ENCODE measurements at regions of chr1 and their contacts with region 1.

Region 1: DNA sequence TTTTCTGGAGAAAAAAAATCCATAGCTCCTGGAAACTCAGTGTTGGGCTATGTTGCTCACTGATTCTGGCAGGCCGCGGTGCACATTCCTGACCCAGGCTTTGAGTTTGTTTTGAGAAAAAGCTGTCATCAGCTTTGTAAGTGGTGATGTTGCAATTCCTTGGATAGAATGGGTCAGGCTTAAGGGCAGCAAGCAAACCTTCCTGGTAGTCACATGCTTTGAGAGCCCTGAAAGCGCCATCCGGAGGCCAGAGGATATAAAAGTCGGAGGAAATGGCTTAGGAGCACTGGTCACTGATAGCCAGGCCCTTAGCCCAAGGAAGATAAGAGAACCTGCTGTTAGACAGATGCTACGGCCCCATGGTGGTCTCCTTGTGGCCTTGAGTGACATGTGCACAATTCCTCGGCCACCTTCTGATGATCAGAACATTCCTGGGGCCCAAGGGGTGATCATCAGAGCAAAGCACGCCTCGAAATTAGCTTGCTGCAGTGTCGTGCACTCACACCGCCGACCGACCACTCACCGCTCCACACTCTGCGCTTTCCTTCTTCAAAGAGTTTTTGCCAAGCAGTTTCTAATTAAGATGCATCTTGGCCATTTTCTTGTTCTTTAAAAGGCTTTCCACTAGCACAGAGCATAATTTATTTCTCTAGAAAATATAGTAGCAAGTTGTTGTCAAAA is 78.6 kb downstream of the MAN1C1 start:
- DNase-seq: peak; percentile 99
- ATAC-seq: peak; percentile 78
- H3K4me3 ChIP-seq: no peak overlapping the region
- H3K27ac ChIP-seq: peak overlapping the region; percentile 96
- H3K4me1 ChIP-seq: peaks cover 32% of the 10 kb centered on the region
- H3K27me3 ChIP-seq: no peaks in the 10 kb centered on the region
- CTCF ChIP-seq: peak; percentile 51
- POLR2A ChIP-seq: no peak
- RAD21 ChIP-seq: peak; percentile 53

Region 2: GRCh38 chr1:25392841-25393240 is 302.4 kb before region 1 on chr1:
- CTCF ChIA-PET with region 1: no interaction called
- POLR2A ChIA-PET with region 1: no interaction called
- dilution Hi-C with region 1: no loop called
- in situ Hi-C with region 1: no loop called
- intact Hi-C with region 1: no loop called
- DNase-seq: no peak
- ATAC-seq: no peak
- H3K4me3 ChIP-seq: no peak overlapping the region
- H3K27ac ChIP-seq: no peak overlapping the region
- H3K4me1 ChIP-seq: no peaks in the 10 kb centered on the region
- H3K27me3 ChIP-seq: peaks cover 3% of the 10 kb centered on the region
- CTCF ChIP-seq: no peak
- POLR2A ChIP-seq: no peak
- RAD21 ChIP-seq: no peak

Region 3: DNA sequence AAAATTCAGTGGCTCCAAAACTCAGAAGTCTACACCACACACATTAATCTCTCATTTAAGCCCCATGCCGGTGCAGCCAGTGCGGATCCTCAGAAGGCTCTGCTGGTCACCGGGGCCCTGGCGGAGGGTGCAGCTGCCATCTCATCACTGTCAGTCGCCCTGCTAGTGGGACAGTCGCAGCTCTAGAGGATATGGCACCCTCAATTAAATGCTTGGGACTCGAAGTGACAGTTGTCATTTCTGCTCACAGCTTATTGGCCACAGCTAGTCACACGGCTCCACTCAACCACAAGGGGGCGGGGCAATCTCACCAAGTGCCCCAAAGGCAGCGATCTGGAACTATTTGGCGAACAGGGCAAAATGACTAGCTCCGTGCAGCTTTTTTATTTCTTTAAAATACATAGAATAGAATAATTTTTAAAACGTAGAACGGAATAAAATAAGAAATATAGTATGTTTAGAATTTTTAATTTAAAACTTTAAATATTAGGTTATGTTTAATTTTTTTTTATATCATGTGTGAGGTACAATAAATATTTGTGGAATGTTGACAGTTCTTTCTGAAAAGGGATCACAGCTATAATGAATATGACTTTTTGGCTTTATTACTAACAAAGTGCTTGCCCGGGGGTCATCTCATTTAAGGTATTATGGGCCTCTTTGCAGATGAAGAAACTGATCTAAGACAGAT is 86.6 kb before region 1 on chr1:
- CTCF ChIA-PET with region 1: interaction called, 15 read pairs
- POLR2A ChIA-PET with region 1: no interaction called
- dilution Hi-C with region 1: no loop called
- in situ Hi-C with region 1: no loop called
- intact Hi-C with region 1: no loop called
- DNase-seq: peak; percentile 64
- ATAC-seq: peak; percentile 82
- H3K4me3 ChIP-seq: no peak overlapping the region
- H3K27ac ChIP-seq: no peak overlapping the region
- H3K4me1 ChIP-seq: no peaks in the 10 kb centered on the region
- H3K27me3 ChIP-seq: peaks cover 20% of the 10 kb centered on the region
- CTCF ChIP-seq: peak; percentile 65
- POLR2A ChIP-seq: no peak
- RAD21 ChIP-seq: peak; percentile 81

Region 4: GRCh38 chr1:25711555-25712298 is 16.5 kb after region 1 on chr1:
- CTCF ChIA-PET with region 1: interaction called, 3 read pairs
- POLR2A ChIA-PET with region 1: no interaction called
- dilution Hi-C with region 1: no loop called
- in situ Hi-C with region 1: no loop called
- intact Hi-C with region 1: loop called (anchors 1 kb)
- DNase-seq: peak; percentile 92
- ATAC-seq: peak; percentile 82
- H3K4me3 ChIP-seq: no peak overlapping the region
- H3K27ac ChIP-seq: peak overlapping the region; percentile 100
- H3K4me1 ChIP-seq: peaks cover 60% of the 10 kb centered on the region
- H3K27me3 ChIP-seq: no peaks in the 10 kb centered on the region
- CTCF ChIP-seq: no peak
- POLR2A ChIP-seq: no peak
- RAD21 ChIP-seq: peak; percentile 14; the same call in 1 of the 2 replicates

Region 5: DNA sequence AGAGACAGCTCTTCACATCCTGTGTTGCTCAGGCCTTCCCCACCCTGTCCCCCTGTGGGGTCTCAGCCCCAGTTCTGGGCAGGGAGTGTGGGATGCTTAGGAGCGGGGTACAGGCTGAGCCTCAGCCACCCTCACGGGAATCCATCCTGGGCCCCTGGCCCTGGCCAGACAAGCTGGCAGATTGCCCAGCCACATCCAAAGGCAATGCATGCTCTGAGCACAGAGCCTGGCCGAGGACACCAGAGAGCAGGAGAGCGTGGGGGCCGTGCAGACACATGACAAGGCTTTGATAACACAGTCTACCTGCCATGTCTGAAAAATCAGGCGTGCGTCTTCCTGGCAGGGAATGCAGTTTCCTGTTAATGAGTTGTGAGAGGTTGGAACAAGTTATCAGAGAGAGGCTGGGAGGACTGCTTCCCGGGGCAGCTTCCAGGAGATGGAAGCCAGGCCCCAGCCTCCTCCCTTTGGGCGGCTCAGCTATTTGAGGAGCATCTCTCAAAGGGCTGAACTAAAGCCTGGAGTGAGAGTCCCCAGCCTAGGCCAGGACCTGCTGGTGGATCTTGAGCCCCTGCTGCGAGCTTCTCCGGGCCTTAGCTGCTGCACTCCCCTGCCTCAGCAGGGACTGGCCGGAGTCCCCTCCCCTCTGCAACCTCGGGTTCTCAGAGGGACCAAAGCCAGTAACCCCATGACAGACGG is 32.6 kb after region 1 on chr1:
- CTCF ChIA-PET with region 1: no interaction called
- POLR2A ChIA-PET with region 1: no interaction called
- dilution Hi-C with region 1: no loop called
- in situ Hi-C with region 1: no loop called
- intact Hi-C with region 1: no loop called
- DNase-seq: peak; percentile 28
- ATAC-seq: peak; percentile 57
- H3K4me3 ChIP-seq: no peak overlapping the region
- H3K27ac ChIP-seq: peak overlapping the region; percentile 8; the same call in 1 of the 2 replicates
- H3K4me1 ChIP-seq: peaks cover 14% of the 10 kb centered on the region
- H3K27me3 ChIP-seq: no peaks in the 10 kb centered on the region; the same call in 1 of the 2 replicates
- CTCF ChIP-seq: no peak
- POLR2A ChIP-seq: no peak
- RAD21 ChIP-seq: no peak

Region 6: GRCh38 chr1:25743826-25744581 is 48.8 kb after region 1 on chr1:
- CTCF ChIA-PET with region 1: interaction called, 3 read pairs
- POLR2A ChIA-PET with region 1: no interaction called
- dilution Hi-C with region 1: no loop called
- in situ Hi-C with region 1: no loop called
- intact Hi-C with region 1: loop called (anchors 1 kb)
- DNase-seq: peak; percentile 53
- ATAC-seq: peak; percentile 92
- H3K4me3 ChIP-seq: no peak overlapping the region
- H3K27ac ChIP-seq: peak overlapping the region; percentile 4; the same call in 1 of the 2 replicates
- H3K4me1 ChIP-seq: peaks cover 8% of the 10 kb centered on the region; the same call in 1 of the 2 replicates
- H3K27me3 ChIP-seq: no peaks in the 10 kb centered on the region; the same call in 1 of the 2 replicates
- CTCF ChIP-seq: peak; percentile 61
- POLR2A ChIP-seq: no peak
- RAD21 ChIP-seq: peak; percentile 72

Region 7: GRCh38 chr1:25922056-25922969 is 227.1 kb after region 1 on chr1:
- CTCF ChIA-PET with region 1: no interaction called
- POLR2A ChIA-PET with region 1: no interaction called
- dilution Hi-C with region 1: no loop called
- in situ Hi-C with region 1: no loop called
- intact Hi-C with region 1: no loop called
- DNase-seq: no peak
- ATAC-seq: peak; percentile 66
- H3K4me3 ChIP-seq: peak overlapping the region; percentile 36
- H3K27ac ChIP-seq: no peak overlapping the region
- H3K4me1 ChIP-seq: peaks cover 10% of the 10 kb centered on the region
- H3K27me3 ChIP-seq: peaks cover 13% of the 10 kb centered on the region
- CTCF ChIP-seq: no peak
- POLR2A ChIP-seq: no peak
- RAD21 ChIP-seq: no peak

Region 8: GRCh38 chr1:26111530-26112406 is 416.5 kb after region 1 on chr1 and contains the start of gene PDIK1L:
- CTCF ChIA-PET with region 1: no interaction called
- POLR2A ChIA-PET with region 1: no interaction called
- dilution Hi-C with region 1: no loop called
- in situ Hi-C with region 1: no loop called
- intact Hi-C with region 1: no loop called
- DNase-seq: peak; percentile 96
- ATAC-seq: peak; percentile 89
- H3K4me3 ChIP-seq: peak within 1 kb of the TSS; percentile 98
- H3K27ac ChIP-seq: peak within 1 kb of the TSS; percentile 82
- H3K4me1 ChIP-seq: no peaks in the 10 kb centered on the region
- H3K27me3 ChIP-seq: no peaks in the 10 kb centered on the region
- CTCF ChIP-seq: no peak
- POLR2A ChIP-seq: no peak
- RAD21 ChIP-seq: no peak
- total RNA-seq, gene PDIK1L: 3.0 and 5.8 TPM in 2 replicates

Measured in IMR-90 (cell line).